PC-9 (cell line): ENCODE measurements at regions of chr3 and their contacts with region 1.

Region 1: DNA sequence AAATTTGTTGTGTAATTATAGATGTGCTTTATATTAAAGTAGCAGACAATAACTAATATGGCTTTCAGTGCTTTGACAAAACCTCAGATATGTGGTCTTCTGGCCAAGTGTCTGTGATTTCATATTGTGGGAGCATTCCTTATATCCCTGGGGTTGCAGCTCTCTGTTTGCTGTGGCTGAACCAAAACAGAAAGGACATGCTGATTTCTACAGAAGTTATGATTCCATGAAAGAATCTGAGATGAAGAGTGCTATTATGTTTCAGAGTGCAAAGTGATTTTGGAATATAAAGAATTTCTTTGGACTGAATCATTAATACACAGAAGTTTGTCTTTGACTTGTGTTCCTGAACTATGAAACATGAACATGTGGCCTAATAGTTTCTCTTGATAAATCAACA is 36.5 kb downstream of the CDV3 start:
- DNase-seq: no peak
- H3K4me3 ChIP-seq: no peak overlapping the region
- H3K27ac ChIP-seq: no peak overlapping the region
- H3K4me1 ChIP-seq: no peaks in the 10 kb centered on the region
- H3K27me3 ChIP-seq: no peaks in the 10 kb centered on the region
- CTCF ChIP-seq: no peak

Region 2: DNA sequence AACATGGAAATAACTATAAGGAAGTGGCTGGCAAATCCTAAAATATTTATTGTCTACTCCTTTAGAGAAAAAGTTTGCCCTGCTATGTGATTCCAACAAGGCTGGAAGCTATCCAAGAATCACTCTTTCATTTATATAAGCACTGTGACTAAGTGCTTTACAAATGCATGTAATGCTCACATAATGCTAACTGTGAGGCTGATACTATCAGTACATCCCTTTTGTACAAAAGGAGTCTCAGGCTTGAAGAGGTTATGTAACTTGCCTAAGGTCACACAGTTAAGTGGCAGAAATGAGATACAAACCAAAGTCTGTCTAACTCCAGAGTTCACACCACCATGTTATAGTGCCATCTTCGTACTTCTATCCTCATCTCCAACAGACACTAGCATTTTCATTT is 34.7 kb after region 1 on chr3:
- CTCF ChIA-PET with region 1: interaction called, 5 read pairs
- POLR2A ChIA-PET with region 1: no interaction called
- intact Hi-C with region 1: loop called (anchors 5 kb)
- DNase-seq: peak; percentile 19 to 93
- H3K4me3 ChIP-seq: no peak overlapping the region
- H3K27ac ChIP-seq: peak overlapping the region; percentile 58
- H3K4me1 ChIP-seq: peaks cover 15% of the 10 kb centered on the region
- H3K27me3 ChIP-seq: no peaks in the 10 kb centered on the region
- CTCF ChIP-seq: no peak

Region 3: GRCh38 chr3:133691410-133692107 is 81.5 kb after region 1 on chr3:
- CTCF ChIA-PET with region 1: no interaction called
- POLR2A ChIA-PET with region 1: no interaction called
- intact Hi-C with region 1: no loop called
- DNase-seq: no peak
- H3K4me3 ChIP-seq: no peak overlapping the region
- H3K27ac ChIP-seq: no peak overlapping the region
- H3K4me1 ChIP-seq: no peaks in the 10 kb centered on the region
- H3K27me3 ChIP-seq: no peaks in the 10 kb centered on the region
- CTCF ChIP-seq: no peak